Common myeloid progenitor, CD34-positive (primary cell): ENCODE measurements at regions of chr20 and their contacts with region 1.

Region 1: DNA sequence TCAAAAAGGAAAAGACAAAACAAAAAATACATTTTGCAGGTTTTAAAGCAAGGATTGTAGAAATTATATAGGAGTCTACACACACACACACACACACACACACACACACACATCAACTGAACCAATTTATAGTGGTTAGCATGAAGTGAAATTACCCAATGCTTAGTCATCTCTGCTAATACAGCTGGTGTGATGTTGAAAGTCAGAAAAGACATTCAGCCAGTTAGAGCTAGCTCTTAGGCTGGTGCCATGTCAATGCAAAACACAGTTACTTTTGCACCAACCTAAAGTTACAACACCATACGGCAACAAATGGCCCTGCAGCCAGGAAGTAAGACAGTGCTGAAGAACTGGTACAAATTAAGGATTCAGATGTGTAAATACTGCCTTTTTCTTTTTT is 15.2 kb downstream of the FAM210B start:
- DNase-seq: peak; percentile 81 to 96 (median 94)
- H3K4me3 ChIP-seq: peak overlapping the region in 1 of 7 experiments; percentile 9
- H3K27ac ChIP-seq: peak overlapping the region in 1 of 2 experiments; percentile 38
- H3K4me1 ChIP-seq: peaks cover 0 to 21% (median 3%) of the 10 kb centered on the region in 4 experiments
- H3K27me3 ChIP-seq: no peaks in the 10 kb centered on the region

Region 2: DNA sequence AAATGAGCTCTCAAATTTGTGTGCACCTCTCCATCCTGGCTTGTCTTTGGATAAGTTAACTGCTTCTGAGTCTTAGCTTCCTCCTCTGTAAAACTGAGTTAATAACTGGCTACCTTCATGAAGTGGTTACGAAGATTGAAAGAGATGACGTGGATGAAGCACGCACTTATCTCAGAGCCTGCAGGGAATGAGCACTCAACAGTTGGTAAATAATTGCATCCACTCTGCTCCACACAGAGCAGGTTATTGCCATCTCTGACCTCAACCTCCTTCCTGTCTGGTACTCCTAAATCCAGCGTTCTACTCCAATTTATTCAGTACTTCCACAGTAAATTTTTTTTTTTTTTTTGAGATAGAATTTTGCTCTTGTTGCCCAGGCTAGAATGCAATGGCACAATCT is 11.2 kb after region 1 on chr20:
- CTCF ChIA-PET with region 1: interaction called, 11 read pairs
- POLR2A ChIA-PET with region 1: no interaction called
- DNase-seq: no peak
- H3K4me3 ChIP-seq: no peak overlapping the region
- H3K27ac ChIP-seq: no peak overlapping the region
- H3K4me1 ChIP-seq: no peaks in the 10 kb centered on the region
- H3K27me3 ChIP-seq: no peaks in the 10 kb centered on the region